CD4-positive, alpha-beta T cell (primary cell): ENCODE measurements at regions of chr17 and their contacts with region 1.

Region 1: DNA sequence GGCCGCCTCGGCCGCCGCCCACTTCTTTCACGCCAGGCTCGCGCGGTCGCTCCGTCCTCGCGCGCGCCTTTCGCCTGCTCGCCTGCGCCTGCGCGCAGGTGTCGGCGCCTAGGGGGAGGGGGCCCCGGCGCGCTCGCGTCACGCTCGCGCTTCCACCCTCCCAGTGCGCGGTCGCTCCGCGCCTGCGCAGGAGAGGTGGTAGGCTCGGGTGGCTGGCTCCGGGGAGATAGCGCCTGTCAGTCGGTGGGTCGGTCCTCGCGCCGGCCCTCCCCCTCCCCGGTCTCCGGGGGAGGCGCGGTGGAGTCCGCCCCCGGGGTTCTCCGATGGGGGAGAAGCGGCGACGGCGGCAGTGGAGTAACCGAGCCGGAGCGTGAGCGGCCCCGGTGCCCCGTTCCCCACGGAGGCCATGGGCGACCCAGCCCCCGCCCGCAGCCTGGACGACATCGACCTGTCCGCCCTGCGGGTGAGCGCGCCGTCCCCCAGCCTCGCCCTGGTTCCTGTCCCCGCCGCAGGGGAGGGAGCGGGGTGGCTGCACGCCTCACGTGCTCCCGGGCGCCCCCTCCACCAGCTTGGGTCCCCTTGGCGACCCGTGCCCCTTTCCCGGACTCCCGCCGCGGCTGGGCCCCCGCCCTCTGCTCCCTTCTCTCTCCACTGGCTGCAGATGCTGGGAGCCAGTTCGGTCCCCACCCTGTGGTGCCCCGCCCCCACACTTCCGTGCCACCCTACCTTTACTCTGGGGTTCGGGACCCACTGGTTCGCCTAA is at the start of gene MINK1:
- DNase-seq: peak; percentile 76 to 98 (median 88)
- ATAC-seq: peak; percentile 87
- H3K4me3 ChIP-seq: peak within 1 kb of the TSS; percentile 85
- H3K4me3 Mint-ChIP-seq: peak within 1 kb of the TSS; percentile 94
- H3K27ac ChIP-seq: peak within 1 kb of the TSS; percentile 63 to 74
- H3K27ac Mint-ChIP-seq: peak within 1 kb of the TSS; percentile 80
- H3K4me1 ChIP-seq: peaks cover 32% of the 10 kb centered on the region
- H3K4me1 Mint-ChIP-seq: peaks cover 48% of the 10 kb centered on the region
- H3K27me3 ChIP-seq: no peaks in the 10 kb centered on the region
- H3K27me3 Mint-ChIP-seq: no peaks in the 10 kb centered on the region
- CTCF ChIP-seq: no peak
- total RNA-seq, gene MINK1: 163 to 171 TPM

Region 2: DNA sequence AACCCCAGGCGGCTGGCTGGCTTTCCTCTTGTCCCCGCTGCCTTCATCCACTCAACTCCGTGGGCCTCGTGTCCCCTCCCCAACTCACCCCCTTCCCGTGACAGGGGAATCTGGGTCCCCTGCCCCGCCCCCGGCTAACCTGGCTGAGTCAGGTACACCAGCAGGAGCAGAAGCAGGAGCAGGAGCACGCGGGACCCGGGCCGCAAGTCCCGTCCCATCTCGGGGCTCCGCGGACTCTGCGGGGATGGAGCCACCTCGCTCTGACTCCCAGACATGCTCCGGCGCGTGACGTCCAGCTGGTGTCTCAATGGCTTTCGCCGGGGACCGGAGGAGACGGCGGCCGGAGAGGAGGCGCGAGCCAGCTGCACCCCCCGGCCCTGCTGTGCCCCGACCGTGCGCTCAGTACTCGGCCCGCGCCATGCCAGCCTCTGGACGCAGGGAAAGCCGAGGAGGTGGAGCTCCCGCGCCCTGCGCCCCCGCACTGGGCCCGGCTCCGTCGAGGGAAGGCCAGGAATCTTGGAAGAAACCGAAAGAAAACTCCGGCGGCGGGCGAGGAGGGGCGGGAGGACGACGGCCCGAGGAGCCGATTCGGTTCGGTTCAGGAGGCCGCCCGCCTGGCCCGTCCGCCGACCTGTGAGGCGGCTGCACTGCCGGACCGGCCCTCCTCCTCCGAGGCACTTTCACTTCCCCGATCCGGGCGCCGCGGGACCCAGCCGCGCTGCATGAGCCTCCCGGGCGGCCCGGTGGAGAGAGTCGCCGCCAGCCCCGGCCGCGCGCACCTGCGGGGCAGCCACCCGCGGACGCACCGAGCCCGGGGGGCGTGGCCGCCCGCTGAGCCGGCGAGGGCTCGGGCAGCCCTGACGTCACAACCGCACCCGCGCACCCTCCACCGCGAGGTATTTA is 94.0 kb before region 1 on chr17 and contains the starts of genes CXCL16 and ZMYND15:
- CTCF ChIA-PET with region 1: no interaction called
- POLR2A ChIA-PET with region 1: no interaction called
- intact Hi-C with region 1: no loop called
- DNase-seq: peak in 13 of 14 experiments; percentile 40 to 89 (median 59)
- ATAC-seq: peak; percentile 70
- H3K4me3 ChIP-seq: peak within 1 kb of the TSS; percentile 72
- H3K4me3 Mint-ChIP-seq: peak within 1 kb of the TSS; percentile 97
- H3K27ac ChIP-seq: no peak within 1 kb of the TSS
- H3K27ac Mint-ChIP-seq: peak within 1 kb of the TSS; percentile 89
- H3K4me1 ChIP-seq: peaks cover 24% of the 10 kb centered on the region
- H3K4me1 Mint-ChIP-seq: peaks cover 23% of the 10 kb centered on the region
- H3K27me3 ChIP-seq: peaks cover 6 to 20% of the 10 kb centered on the region in 2 experiments
- H3K27me3 Mint-ChIP-seq: peaks cover 25% of the 10 kb centered on the region
- CTCF ChIP-seq: no peak
- total RNA-seq, gene CXCL16: 24.8 to 25.8 TPM
- total RNA-seq, gene ZMYND15: 3.1 to 3.3 TPM

Region 3: GRCh38 chr17:4796553-4796921 is 36.8 kb before region 1 on chr17:
- CTCF ChIA-PET with region 1: no interaction called
- POLR2A ChIA-PET with region 1: interaction called, 7 read pairs
- intact Hi-C with region 1: loop called (anchors 2 to 5 kb)
- DNase-seq: peak in 2 of 14 experiments; percentile 19 to 33
- ATAC-seq: no peak
- H3K4me3 ChIP-seq: peak overlapping the region; percentile 69
- H3K4me3 Mint-ChIP-seq: peak overlapping the region; percentile 99
- H3K27ac ChIP-seq: peak overlapping the region; percentile 50 to 56
- H3K27ac Mint-ChIP-seq: peak overlapping the region; percentile 84
- H3K4me1 ChIP-seq: peaks cover 20% of the 10 kb centered on the region
- H3K4me1 Mint-ChIP-seq: peaks cover 15% of the 10 kb centered on the region
- H3K27me3 ChIP-seq: no peaks in the 10 kb centered on the region
- H3K27me3 Mint-ChIP-seq: peaks cover 4% of the 10 kb centered on the region
- CTCF ChIP-seq: no peak